ENCODE measurements at regions of chr11 and their contacts with region 1.

Region 1: GRCh38 chr11:15819679-15820286 is 536.6 kb downstream of the SOX6 start:
- DNase-seq: peak; percentile 79 to 84
- ATAC-seq: peak; percentile 71 to 93 (median 86)
- H3K4me3 ChIP-seq: no peak overlapping the region
- H3K27ac ChIP-seq: peak overlapping the region in 2 of 10 donors; percentile 18 to 37
- H3K4me1 ChIP-seq: peaks cover 7 to 61% (median 50%) of the 10 kb centered on the region in 9 donors
- H3K27me3 ChIP-seq: no peaks in the 10 kb centered on the region
- CTCF ChIP-seq: peak; percentile 80 to 97 (median 90)

Region 2: GRCh38 chr11:15327786-15328231 is 492.0 kb before region 1 on chr11:
- intact Hi-C with region 1: loop called in 1 of 10 experiments (anchors 10 kb)
- DNase-seq: peak; percentile 25 to 50
- ATAC-seq: peak; percentile 71 to 92 (median 78)
- H3K4me3 ChIP-seq: no peak overlapping the region
- H3K27ac ChIP-seq: no peak overlapping the region
- H3K4me1 ChIP-seq: no peaks in the 10 kb centered on the region
- H3K27me3 ChIP-seq: no peaks in the 10 kb centered on the region
- CTCF ChIP-seq: peak; percentile 45 to 79 (median 71)

Region 3: DNA sequence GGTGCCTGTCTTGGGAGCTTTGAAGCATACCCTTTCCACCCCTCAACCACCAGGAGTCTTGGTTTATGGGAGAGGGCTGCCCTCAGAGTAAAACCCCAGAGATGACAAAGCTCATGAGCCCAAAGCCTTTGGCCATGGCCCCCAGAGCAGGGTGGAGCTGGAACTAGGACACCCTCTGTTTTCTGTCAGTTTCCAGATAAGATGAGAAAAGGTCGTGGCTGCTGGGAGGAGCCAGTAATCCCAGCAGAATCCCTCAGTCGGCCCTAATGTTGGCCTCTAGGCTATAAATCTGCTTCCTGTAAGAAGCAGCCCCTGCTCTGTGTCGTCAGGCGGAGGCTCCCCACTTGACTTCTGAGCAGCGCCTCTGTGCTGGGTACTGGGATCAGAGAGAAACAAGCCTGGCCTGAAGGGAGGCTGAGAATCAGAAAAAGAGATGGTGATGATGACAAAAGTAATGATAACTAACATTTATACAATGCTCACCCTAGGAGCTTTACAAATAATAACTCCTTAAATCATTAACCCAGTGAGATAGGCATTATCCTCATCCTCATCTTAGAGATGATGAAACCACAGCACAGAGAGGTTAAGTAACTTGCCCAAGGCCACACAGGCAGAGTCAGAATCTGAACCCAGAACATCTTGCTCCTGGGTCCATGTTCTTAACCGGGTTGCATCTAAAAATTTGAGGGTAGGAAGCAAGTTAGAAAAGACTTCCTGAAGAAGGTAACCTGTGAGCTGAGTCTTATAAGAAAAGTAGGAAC is 65.2 kb after region 1 on chr11:
- intact Hi-C with region 1: loop called in 1 of 10 experiments (anchors 2 kb)
- DNase-seq: peak in 1 of 2 donors; percentile 27
- ATAC-seq: peak in 3 of 8 donors; percentile 25 to 44 (median 43)
- H3K4me3 ChIP-seq: no peak overlapping the region
- H3K27ac ChIP-seq: peak overlapping the region in 7 of 10 donors; percentile 32 to 72 (median 64)
- H3K4me1 ChIP-seq: peaks cover 3 to 41% (median 17%) of the 10 kb centered on the region in 9 donors
- H3K27me3 ChIP-seq: no peaks in the 10 kb centered on the region
- CTCF ChIP-seq: no peak

Region 4: DNA sequence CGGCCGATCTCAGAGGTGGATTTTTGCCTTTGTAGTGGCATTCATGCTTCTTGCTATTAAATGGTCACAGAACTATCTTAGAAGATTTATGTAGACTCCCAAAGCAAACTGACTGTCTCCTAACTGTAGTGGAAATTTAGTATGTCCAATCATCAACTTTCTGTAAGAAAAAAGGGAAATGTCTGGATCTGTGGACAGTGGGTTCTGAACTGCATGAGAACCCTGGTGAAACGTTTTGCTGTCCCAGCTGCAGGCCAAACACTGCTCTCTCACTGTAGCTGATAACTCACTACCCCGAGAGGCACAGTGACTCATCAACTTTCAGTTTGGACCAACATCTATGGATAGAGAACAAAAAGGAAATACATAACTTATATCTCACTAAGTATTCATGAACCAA is 149.5 kb after region 1 on chr11:
- intact Hi-C with region 1: loop called in 1 of 10 experiments (anchors 10 kb)
- DNase-seq: peak; percentile 42 to 81
- ATAC-seq: peak; percentile 84 to 93 (median 91)
- H3K4me3 ChIP-seq: peak overlapping the region in 4 of 10 donors; percentile 1 to 26 (median 12)
- H3K27ac ChIP-seq: peak overlapping the region; percentile 77 to 92 (median 83)
- H3K4me1 ChIP-seq: peaks cover 10 to 57% (median 40%) of the 10 kb centered on the region in 9 donors
- H3K27me3 ChIP-seq: no peaks in the 10 kb centered on the region
- CTCF ChIP-seq: no peak

Region 5: GRCh38 chr11:15988693-15989231 is 169.0 kb after region 1 on chr11:
- intact Hi-C with region 1: loop called in 1 of 10 experiments (anchors 10 kb)
- DNase-seq: peak in 1 of 2 donors; percentile 14
- ATAC-seq: peak; percentile 42 to 87 (median 76)
- H3K4me3 ChIP-seq: no peak overlapping the region
- H3K27ac ChIP-seq: peak overlapping the region in 2 of 10 donors; percentile 8 to 19
- H3K4me1 ChIP-seq: peaks cover 0 to 16% (median 8%) of the 10 kb centered on the region in 9 donors
- H3K27me3 ChIP-seq: no peaks in the 10 kb centered on the region
- CTCF ChIP-seq: peak in 6 of 9 donors; percentile 2 to 45 (median 34)